Heart right ventricle (tissue), 16 donors: ENCODE measurements at regions of chr14 and their contacts with region 1.

Region 1: DNA sequence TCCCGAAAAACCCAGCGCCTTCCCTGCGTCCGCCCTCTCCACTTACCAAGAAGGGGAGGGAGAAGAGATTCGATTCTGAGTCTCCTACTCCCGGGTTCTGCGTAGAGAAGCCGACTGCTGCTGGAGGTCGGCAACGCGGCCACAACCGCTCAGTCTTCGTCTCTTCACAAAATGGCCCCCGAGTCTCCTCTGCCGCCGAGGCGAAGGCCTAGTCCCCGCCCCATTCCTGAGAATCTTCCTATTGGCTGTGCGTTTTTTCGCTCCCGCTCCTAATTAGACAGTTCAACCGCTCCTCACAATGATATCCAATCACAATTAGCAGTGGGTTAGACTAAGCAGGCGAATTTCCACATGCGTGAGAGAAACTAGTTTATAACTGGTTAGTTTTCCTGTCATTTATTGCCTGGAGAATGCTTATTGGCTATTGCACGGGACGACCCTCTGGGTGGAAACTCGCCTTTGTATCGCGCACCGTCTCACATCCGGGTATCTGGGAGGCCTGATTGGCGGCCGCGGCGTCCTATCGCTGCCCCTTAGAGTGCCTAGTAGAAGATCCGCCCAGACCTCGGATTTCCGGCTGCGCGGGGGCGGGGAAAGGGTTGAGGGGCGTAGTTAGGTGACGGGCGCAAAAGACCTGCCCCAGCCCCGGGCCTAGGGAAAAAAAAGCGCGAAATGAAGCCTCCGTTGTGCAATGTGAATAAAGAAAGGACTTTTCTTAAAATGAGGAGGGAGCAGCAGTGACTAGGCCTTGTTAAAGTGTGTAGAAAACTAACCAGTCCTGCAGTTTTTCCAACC is at the start of gene HNRNPC:
- DNase-seq: peak; percentile 100
- ATAC-seq: peak; percentile 96 to 99 (median 98)
- H3K4me3 ChIP-seq: peak within 1 kb of the TSS; percentile 62 to 97 (median 79)
- H3K27ac ChIP-seq: peak within 1 kb of the TSS; percentile 83 to 97 (median 92)
- H3K4me1 ChIP-seq: peaks cover 4 to 49% (median 43%) of the 10 kb centered on the region in 9 donors
- H3K27me3 ChIP-seq: no peaks in the 10 kb centered on the region
- CTCF ChIP-seq: no peak
- total RNA-seq, gene HNRNPC: 227 to 300 (median 259) TPM

Region 2: GRCh38 chr14:21248739-21249411 is 20.6 kb before region 1 on chr14:
- intact Hi-C with region 1: loop called in 1 of 10 experiments (anchors 1 kb)
- DNase-seq: no peak
- ATAC-seq: no peak
- H3K4me3 ChIP-seq: no peak overlapping the region
- H3K27ac ChIP-seq: no peak overlapping the region
- H3K4me1 ChIP-seq: peaks cover 3 to 61% (median 22%) of the 10 kb centered on the region in 9 donors
- H3K27me3 ChIP-seq: no peaks in the 10 kb centered on the region
- CTCF ChIP-seq: no peak

Region 3: GRCh38 chr14:21308479-21309237 is 39.2 kb after region 1 on chr14:
- intact Hi-C with region 1: loop called in 1 of 10 experiments (anchors 5 kb)
- DNase-seq: peak; percentile 29 to 71
- ATAC-seq: peak; percentile 88 to 94 (median 91)
- H3K4me3 ChIP-seq: peak overlapping the region in 9 of 10 donors; percentile 12 to 50 (median 45)
- H3K27ac ChIP-seq: peak overlapping the region in 9 of 10 donors; percentile 36 to 85 (median 69)
- H3K4me1 ChIP-seq: peaks cover 0 to 17% (median 0%) of the 10 kb centered on the region in 9 donors
- H3K27me3 ChIP-seq: peaks cover 0 to 8% (median 0%) of the 10 kb centered on the region in 7 donors
- CTCF ChIP-seq: no peak